K562 (cell line): ENCODE measurements at regions of chr1 and their contacts with region 1.

Region 1: GRCh38 chr1:38859561-38860453 is at the start of gene RRAGC:
- DNase-seq: peak; percentile 99 to 100 (median 100)
- ATAC-seq: peak; percentile 99
- H3K4me3 ChIP-seq: peak within 1 kb of the TSS; percentile 66
- H3K27ac ChIP-seq: peak within 1 kb of the TSS; percentile 59
- H3K4me1 ChIP-seq: peaks cover 15 to 22% of the 10 kb centered on the region in 2 experiments; a peak in 4 of 5 replicates
- H3K27me3 ChIP-seq: no peaks in the 10 kb centered on the region
- CTCF ChIP-seq: no peak
- EP300 ChIP-seq: peak; percentile 65; the same call in 1 of the 2 replicates
- POLR2A ChIP-seq: peak; percentile 65
- RAD21 ChIP-seq: peak in 1 of 2 experiments; percentile 26; a peak in 1 of 4 replicates
- polyA plus RNA-seq, gene RRAGC: 10.4 to 16.9 TPM

Region 2: DNA sequence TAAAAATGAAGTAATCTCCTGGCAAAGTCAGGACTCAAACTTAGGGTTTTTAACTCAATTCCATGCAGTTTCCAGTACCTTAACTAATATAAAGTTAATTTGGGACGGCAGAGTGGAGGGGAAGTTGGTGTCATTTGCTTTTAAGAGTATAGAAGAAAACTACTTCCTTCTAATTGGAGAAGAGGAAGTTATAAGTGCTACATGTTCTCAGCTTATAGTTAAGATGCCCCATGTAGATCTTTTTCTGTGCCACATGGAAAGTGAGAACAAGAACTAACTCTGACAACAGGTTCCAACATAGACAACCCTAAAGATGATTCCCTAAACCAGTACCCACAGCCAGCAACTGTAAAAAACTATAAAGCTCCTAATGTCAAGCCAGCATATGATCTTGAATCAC is 11.7 kb before region 1 on chr1:
- CTCF ChIA-PET with region 1: no interaction called
- POLR2A ChIA-PET with region 1: interaction called, 22 read pairs
- in situ Hi-C with region 1: no loop called
- intact Hi-C with region 1: no loop called
- DNase-seq: no peak
- ATAC-seq: no peak
- H3K4me3 ChIP-seq: no peak overlapping the region
- H3K27ac ChIP-seq: no peak overlapping the region
- H3K4me1 ChIP-seq: no peaks in the 10 kb centered on the region
- H3K27me3 ChIP-seq: no peaks in the 10 kb centered on the region
- CTCF ChIP-seq: no peak
- EP300 ChIP-seq: no peak
- POLR2A ChIP-seq: no peak
- RAD21 ChIP-seq: no peak

Region 3: GRCh38 chr1:38873027-38873969 is 13.5 kb after region 1 on chr1 and contains the start of gene MYCBP:
- CTCF ChIA-PET with region 1: no interaction called
- POLR2A ChIA-PET with region 1: interaction called, 12 read pairs
- in situ Hi-C with region 1: no loop called
- intact Hi-C with region 1: no loop called
- DNase-seq: peak; percentile 98 to 99 (median 98)
- ATAC-seq: peak; percentile 98
- H3K4me3 ChIP-seq: peak within 1 kb of the TSS; percentile 59
- H3K27ac ChIP-seq: peak within 1 kb of the TSS; percentile 68
- H3K4me1 ChIP-seq: peaks cover 7 to 20% of the 10 kb centered on the region in 2 experiments; a peak in 4 of 5 replicates
- H3K27me3 ChIP-seq: no peaks in the 10 kb centered on the region
- CTCF ChIP-seq: 0 out of 6 replicates have a peak, but pooled peaks of 1 of the 3 experiments have one; percentile 2
- EP300 ChIP-seq: 0 out of 2 replicates have a peak, but pooled peaks have one; percentile 27
- POLR2A ChIP-seq: peak; percentile 76
- RAD21 ChIP-seq: no peak
- polyA plus RNA-seq, gene MYCBP: 227 to 253 TPM

Region 4: GRCh38 chr1:38964140-38964548 is 104.3 kb after region 1 on chr1:
- CTCF ChIA-PET with region 1: no interaction called
- POLR2A ChIA-PET with region 1: no interaction called
- in situ Hi-C with region 1: no loop called
- intact Hi-C with region 1: loop called (anchors 1 kb)
- DNase-seq: peak in 3 of 4 experiments; percentile 24 to 51 (median 40)
- ATAC-seq: peak; percentile 91
- H3K4me3 ChIP-seq: no peak overlapping the region
- H3K27ac ChIP-seq: no peak overlapping the region
- H3K4me1 ChIP-seq: peaks cover 9 to 11% of the 10 kb centered on the region in 2 experiments; a peak in 4 of 5 replicates
- H3K27me3 ChIP-seq: no peaks in the 10 kb centered on the region
- CTCF ChIP-seq: peak; percentile 57 to 73 (median 69)
- EP300 ChIP-seq: no peak
- POLR2A ChIP-seq: no peak
- RAD21 ChIP-seq: peak; percentile 52 to 74; a peak in 3 of 4 replicates

Region 5: DNA sequence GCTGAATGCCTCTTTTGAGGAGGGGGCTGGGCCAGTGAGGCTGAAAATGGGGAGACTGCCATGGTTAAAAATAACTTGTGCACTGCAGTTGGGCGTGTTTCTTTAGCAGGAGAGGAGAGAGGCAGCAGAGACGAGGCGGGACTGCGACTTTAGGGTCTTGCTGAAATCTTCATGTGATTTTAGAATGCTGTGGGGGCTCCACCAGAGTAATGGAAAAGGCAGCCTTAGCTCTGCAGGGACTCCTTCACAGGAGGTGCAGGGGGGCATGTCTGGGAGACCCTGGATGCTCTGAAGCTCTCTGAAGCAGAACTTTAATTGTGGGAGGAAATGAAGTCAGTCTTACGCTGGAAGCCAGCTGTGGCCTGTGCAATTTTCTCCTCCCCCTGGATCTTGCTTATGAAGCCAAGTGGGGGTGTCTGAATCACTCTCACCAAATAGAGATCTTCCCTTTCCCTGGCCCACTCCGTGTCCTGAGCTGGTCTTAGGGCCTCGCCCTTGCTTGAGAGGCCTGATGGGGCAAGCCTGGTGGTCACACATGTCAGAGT is 227.1 kb after region 1 on chr1:
- CTCF ChIA-PET with region 1: no interaction called
- POLR2A ChIA-PET with region 1: no interaction called
- in situ Hi-C with region 1: no loop called
- intact Hi-C with region 1: loop called (anchors 5 kb)
- DNase-seq: no peak
- ATAC-seq: no peak
- H3K4me3 ChIP-seq: no peak overlapping the region
- H3K27ac ChIP-seq: no peak overlapping the region
- H3K4me1 ChIP-seq: peaks cover 2 to 6% of the 10 kb centered on the region in 2 experiments; a peak in 3 of 5 replicates
- H3K27me3 ChIP-seq: peaks cover 22 to 23% of the 10 kb centered on the region in 2 experiments
- CTCF ChIP-seq: no peak
- EP300 ChIP-seq: no peak
- POLR2A ChIP-seq: no peak
- RAD21 ChIP-seq: no peak